ENCODE measurements at regions of chr1 and their contacts with region 1.

Region 1: GRCh38 chr1:160058087-160058486 is 11.9 kb downstream of the KCNJ10 start:
- DNase-seq: peak; percentile 46

Region 2: DNA sequence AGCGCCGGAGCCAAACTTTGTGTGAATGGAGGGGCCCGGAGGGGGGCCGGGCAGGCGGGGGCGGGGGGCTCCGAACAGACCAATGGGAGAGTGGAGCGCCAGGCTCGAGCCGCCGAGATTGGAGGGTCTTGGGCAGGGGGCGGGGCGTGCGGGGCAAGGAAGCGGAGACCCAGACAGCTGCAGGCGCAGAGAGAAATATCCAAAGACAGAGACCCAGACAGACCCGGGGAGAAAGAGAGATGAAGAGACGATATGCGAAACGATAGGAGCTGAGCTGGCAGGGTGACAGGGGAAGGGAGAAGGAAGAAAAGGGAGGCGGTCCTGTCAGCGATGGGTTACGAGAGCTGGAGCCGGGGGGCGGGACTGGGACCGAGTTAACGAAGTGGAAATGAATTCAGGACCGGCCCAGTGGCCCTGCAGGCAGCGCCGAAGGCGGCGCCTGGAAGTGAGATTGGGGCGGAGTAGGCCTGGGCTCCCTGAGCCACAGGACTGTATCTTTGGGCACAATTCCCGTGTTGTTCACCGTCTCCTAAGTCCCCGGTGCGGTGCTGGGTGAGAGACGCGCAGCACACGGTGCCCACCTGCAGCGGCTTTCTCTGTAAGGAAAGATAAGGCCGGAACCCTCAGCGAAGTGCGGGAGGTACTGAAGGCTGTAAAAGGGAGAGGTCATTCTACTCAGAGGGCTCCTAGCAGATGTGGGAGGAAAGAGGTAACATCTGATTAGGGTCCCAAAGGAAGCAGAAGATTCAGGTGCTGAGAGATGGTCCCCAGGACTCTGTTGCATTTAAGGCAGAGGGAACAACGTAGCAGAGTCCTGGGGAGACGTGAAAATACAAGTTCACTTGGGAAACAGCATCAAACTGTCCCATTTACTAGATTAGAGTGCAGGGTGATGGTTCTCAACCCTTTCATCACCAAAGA is 12.4 kb after region 1 on chr1:
- CTCF ChIA-PET with region 1: interaction called, 13 read pairs
- POLR2A ChIA-PET with region 1: no interaction called
- DNase-seq: peak; percentile 94

Region 3: GRCh38 chr1:160078512-160079195 is 20.6 kb after region 1 on chr1:
- CTCF ChIA-PET with region 1: interaction called, 20 read pairs
- POLR2A ChIA-PET with region 1: no interaction called
- DNase-seq: peak; percentile 81

Region 4: GRCh38 chr1:160539990-160540858 is 482.1 kb after region 1 on chr1:
- CTCF ChIA-PET with region 1: no interaction called
- POLR2A ChIA-PET with region 1: no interaction called
- DNase-seq: no peak

Measured in HEK293T (cell line).